Activated naive CD8-positive, alpha-beta T cell treated with anti-CD3 and anti-CD28 coated beads, Interleukin-2, amount 10 ng/mL, durations not matched to agents 7 days and 5 days (primary cell): ENCODE measurements at regions of chr6 and their contacts with region 1.

Region 1: GRCh38 chr6:26103770-26104456 is 16.7 kb downstream of the HFE start:
- DNase-seq: peak; percentile 86
- ATAC-seq: peak; percentile 89
- H3K4me3 Mint-ChIP-seq: peak overlapping the region; percentile 93
- H3K27ac Mint-ChIP-seq: peak overlapping the region; percentile 100
- H3K4me1 Mint-ChIP-seq: peaks cover 18% of the 10 kb centered on the region
- H3K27me3 Mint-ChIP-seq: no peaks in the 10 kb centered on the region

Region 2: GRCh38 chr6:26087284-26088115 is 16.4 kb before region 1 on chr6 and contains the start of gene HFE:
- POLR2A ChIA-PET with region 1: interaction called, 37 read pairs
- DNase-seq: peak; percentile 65
- ATAC-seq: peak; percentile 9
- H3K4me3 Mint-ChIP-seq: peak within 1 kb of the TSS; percentile 86
- H3K27ac Mint-ChIP-seq: peak within 1 kb of the TSS; percentile 81
- H3K4me1 Mint-ChIP-seq: peaks cover 50% of the 10 kb centered on the region
- H3K27me3 Mint-ChIP-seq: no peaks in the 10 kb centered on the region
- total RNA-seq, gene HFE: 5.0 to 7.2 TPM

Region 3: DNA sequence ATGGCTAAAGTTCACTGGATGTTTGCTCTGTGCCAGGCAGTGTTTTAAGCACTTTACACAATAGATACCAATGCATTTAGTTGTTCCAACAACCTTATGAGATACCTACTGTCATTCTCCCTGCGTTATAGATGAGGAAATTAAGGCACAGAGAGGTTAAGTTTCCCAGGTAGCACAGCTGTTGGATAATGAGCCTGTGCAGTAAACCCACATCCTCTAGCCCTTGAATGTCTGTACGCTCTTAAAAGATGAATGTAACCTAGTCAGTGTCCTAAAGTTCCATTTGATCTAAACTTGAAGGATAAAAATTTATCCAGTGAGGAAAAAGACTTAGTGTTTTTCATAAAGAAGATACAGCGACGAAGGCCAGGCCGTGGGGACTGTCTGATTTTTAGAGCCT is 11.3 kb after region 1 on chr6:
- POLR2A ChIA-PET with region 1: interaction called, 24 read pairs
- DNase-seq: no peak
- ATAC-seq: peak; percentile 71
- H3K4me3 Mint-ChIP-seq: peak overlapping the region; percentile 36
- H3K27ac Mint-ChIP-seq: peak overlapping the region; percentile 66
- H3K4me1 Mint-ChIP-seq: peaks cover 23% of the 10 kb centered on the region
- H3K27me3 Mint-ChIP-seq: peaks cover 3% of the 10 kb centered on the region

Region 4: GRCh38 chr6:26183581-26184366 is 79.9 kb after region 1 on chr6:
- POLR2A ChIA-PET with region 1: interaction called, 25 read pairs
- DNase-seq: peak; percentile 78
- ATAC-seq: peak; percentile 85
- H3K4me3 Mint-ChIP-seq: peak overlapping the region; percentile 96
- H3K27ac Mint-ChIP-seq: peak overlapping the region; percentile 99
- H3K4me1 Mint-ChIP-seq: peaks cover 48% of the 10 kb centered on the region
- H3K27me3 Mint-ChIP-seq: no peaks in the 10 kb centered on the region